ENCODE measurements at regions of chr9 and their contacts with region 1.

Region 1: GRCh38 chr9:131349881-131350563 is 43.9 kb upstream of the PRRC2B start:
- DNase-seq: peak; percentile 70 to 89 (median 78)
- H3K4me3 ChIP-seq: no peak overlapping the region
- H3K4me3 Mint-ChIP-seq: peak overlapping the region in 2 of 7 donors; percentile 32 to 61
- H3K27ac ChIP-seq: no peak overlapping the region
- H3K27ac Mint-ChIP-seq: peak overlapping the region in 2 of 8 donors; percentile 37 to 43
- H3K4me1 ChIP-seq: peaks cover 7% of the 10 kb centered on the region
- H3K4me1 Mint-ChIP-seq: peaks cover 5 to 7% (median 7%) of the 10 kb centered on the region in 3 donors
- H3K27me3 ChIP-seq: no peaks in the 10 kb centered on the region
- H3K27me3 Mint-ChIP-seq: peaks cover 3 to 6% of the 10 kb centered on the region in 2 donors

Region 2: GRCh38 chr9:131366761-131367401 is 16.9 kb after region 1 on chr9:
- CTCF ChIA-PET with region 1: interaction called, 15 read pairs
- POLR2A ChIA-PET with region 1: no interaction called
- DNase-seq: no peak
- H3K4me3 ChIP-seq: no peak overlapping the region
- H3K4me3 Mint-ChIP-seq: peak overlapping the region in 1 of 7 donors; percentile 38
- H3K27ac ChIP-seq: no peak overlapping the region
- H3K27ac Mint-ChIP-seq: no peak overlapping the region
- H3K4me1 ChIP-seq: peaks cover 2% of the 10 kb centered on the region
- H3K4me1 Mint-ChIP-seq: peaks cover under 1 to 2% (median under 1%) of the 10 kb centered on the region in 3 donors
- H3K27me3 ChIP-seq: no peaks in the 10 kb centered on the region
- H3K27me3 Mint-ChIP-seq: peaks cover 0 to 2% of the 10 kb centered on the region in 2 donors

Region 3: GRCh38 chr9:131407717-131408195 is 57.7 kb after region 1 on chr9:
- CTCF ChIA-PET with region 1: interaction called, 29 read pairs
- POLR2A ChIA-PET with region 1: interaction called, 4 read pairs
- DNase-seq: peak; percentile 37 to 75 (median 68)
- H3K4me3 ChIP-seq: peak overlapping the region; percentile 33
- H3K4me3 Mint-ChIP-seq: peak overlapping the region; percentile 68 to 92 (median 84)
- H3K27ac ChIP-seq: peak overlapping the region; percentile 64
- H3K27ac Mint-ChIP-seq: peak overlapping the region; percentile 64 to 97 (median 94)
- H3K4me1 ChIP-seq: peaks cover 94% of the 10 kb centered on the region
- H3K4me1 Mint-ChIP-seq: peaks cover 79 to 95% (median 92%) of the 10 kb centered on the region in 3 donors
- H3K27me3 ChIP-seq: no peaks in the 10 kb centered on the region
- H3K27me3 Mint-ChIP-seq: no peaks in the 10 kb centered on the region

Region 4: DNA sequence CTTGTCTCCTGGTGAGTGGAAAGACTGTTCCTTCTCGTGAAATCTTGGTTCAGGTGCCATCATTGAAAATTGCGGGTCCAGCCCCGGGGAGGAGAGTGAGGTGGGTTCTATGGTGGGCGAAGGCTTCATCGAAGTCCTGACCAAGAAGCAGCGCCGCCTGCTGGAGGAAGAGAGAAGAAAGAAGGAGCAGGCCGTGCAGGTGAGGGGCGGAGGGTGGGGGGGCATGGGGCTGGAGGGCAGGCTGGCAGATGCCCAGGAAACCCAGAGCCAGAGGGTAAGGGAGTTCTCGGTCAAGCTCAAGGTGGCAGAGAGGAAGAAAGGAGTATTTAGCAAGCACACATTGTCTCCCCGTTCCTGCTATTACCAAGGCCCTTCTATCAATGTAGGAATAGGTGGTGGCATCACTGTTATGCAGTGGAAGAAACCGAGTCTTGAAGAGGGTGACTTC is 128.4 kb after region 1 on chr9:
- CTCF ChIA-PET with region 1: interaction called, 18 read pairs
- POLR2A ChIA-PET with region 1: no interaction called
- DNase-seq: peak; percentile 35 to 70 (median 42)
- H3K4me3 ChIP-seq: no peak overlapping the region
- H3K4me3 Mint-ChIP-seq: no peak overlapping the region
- H3K27ac ChIP-seq: no peak overlapping the region
- H3K27ac Mint-ChIP-seq: peak overlapping the region in 7 of 8 donors; percentile 22 to 95 (median 73)
- H3K4me1 ChIP-seq: no peaks in the 10 kb centered on the region
- H3K4me1 Mint-ChIP-seq: peaks cover 0 to 6% (median 4%) of the 10 kb centered on the region in 3 donors
- H3K27me3 ChIP-seq: no peaks in the 10 kb centered on the region
- H3K27me3 Mint-ChIP-seq: peaks cover 0 to 2% of the 10 kb centered on the region in 2 donors